Naive thymus-derived CD4-positive, alpha-beta T cell (primary cell): ENCODE measurements at regions of chr9 and their contacts with region 1.

Region 1: GRCh38 chr9:25543806-25544205 is 134.4 kb downstream of the TUSC1 start:
- DNase-seq: no peak
- ATAC-seq: no peak
- H3K4me3 ChIP-seq: no peak overlapping the region
- H3K4me3 Mint-ChIP-seq: no peak overlapping the region
- H3K27ac ChIP-seq: no peak overlapping the region
- H3K27ac Mint-ChIP-seq: no peak overlapping the region
- H3K4me1 ChIP-seq: no peaks in the 10 kb centered on the region
- H3K4me1 Mint-ChIP-seq: no peaks in the 10 kb centered on the region
- H3K27me3 ChIP-seq: no peaks in the 10 kb centered on the region
- H3K27me3 Mint-ChIP-seq: no peaks in the 10 kb centered on the region

Region 2: GRCh38 chr9:25557645-25558300 is 14.0 kb after region 1 on chr9:
- CTCF ChIA-PET with region 1: no interaction called
- POLR2A ChIA-PET with region 1: no interaction called
- intact Hi-C with region 1: loop called in 1 of 2 experiments (anchors 2 kb)
- DNase-seq: no peak
- ATAC-seq: no peak
- H3K4me3 ChIP-seq: no peak overlapping the region
- H3K4me3 Mint-ChIP-seq: no peak overlapping the region
- H3K27ac ChIP-seq: no peak overlapping the region
- H3K27ac Mint-ChIP-seq: no peak overlapping the region
- H3K4me1 ChIP-seq: no peaks in the 10 kb centered on the region
- H3K4me1 Mint-ChIP-seq: no peaks in the 10 kb centered on the region
- H3K27me3 ChIP-seq: no peaks in the 10 kb centered on the region
- H3K27me3 Mint-ChIP-seq: no peaks in the 10 kb centered on the region

Region 3: GRCh38 chr9:25629231-25629630 is 85.4 kb after region 1 on chr9:
- CTCF ChIA-PET with region 1: no interaction called
- POLR2A ChIA-PET with region 1: no interaction called
- intact Hi-C with region 1: no loop called
- DNase-seq: no peak
- ATAC-seq: no peak
- H3K4me3 ChIP-seq: no peak overlapping the region
- H3K4me3 Mint-ChIP-seq: no peak overlapping the region
- H3K27ac ChIP-seq: no peak overlapping the region
- H3K27ac Mint-ChIP-seq: no peak overlapping the region
- H3K4me1 ChIP-seq: no peaks in the 10 kb centered on the region
- H3K4me1 Mint-ChIP-seq: no peaks in the 10 kb centered on the region
- H3K27me3 ChIP-seq: no peaks in the 10 kb centered on the region
- H3K27me3 Mint-ChIP-seq: no peaks in the 10 kb centered on the region